Gastrocnemius medialis (tissue), 4 donors: ENCODE measurements at regions of chr7 and their contacts with region 1.

Region 1: DNA sequence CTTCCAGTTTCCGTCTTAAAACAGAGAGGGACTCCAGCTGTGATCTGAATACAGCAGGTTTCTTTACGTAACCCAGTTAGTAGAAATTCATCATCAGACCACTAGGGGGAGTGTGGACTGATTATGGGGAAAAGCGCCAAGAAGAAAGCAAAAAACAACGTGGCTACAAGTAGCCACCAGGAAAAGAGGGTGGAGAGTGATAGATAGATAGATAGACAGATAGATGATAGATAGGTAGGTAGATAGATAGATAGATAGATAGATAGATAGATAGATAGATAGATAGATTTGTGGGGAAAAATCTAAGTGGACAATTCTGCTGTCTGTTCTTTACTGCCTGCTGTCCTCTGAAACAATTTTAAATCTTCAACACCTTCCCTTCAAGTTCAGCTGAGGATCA is 12.7 kb upstream of the AKR1B10 start:
- DNase-seq: no peak
- ATAC-seq: peak; percentile 55 to 70
- H3K4me3 ChIP-seq: no peak overlapping the region
- H3K27ac ChIP-seq: peak overlapping the region in 3 of 4 donors; percentile 78 to 90 (median 86)
- H3K4me1 ChIP-seq: peaks cover 24 to 35% of the 10 kb centered on the region in 2 donors
- H3K27me3 ChIP-seq: no peaks in the 10 kb centered on the region
- CTCF ChIP-seq: peak; percentile 79 to 89 (median 81)
- POLR2A ChIP-seq: no peak

Region 2: DNA sequence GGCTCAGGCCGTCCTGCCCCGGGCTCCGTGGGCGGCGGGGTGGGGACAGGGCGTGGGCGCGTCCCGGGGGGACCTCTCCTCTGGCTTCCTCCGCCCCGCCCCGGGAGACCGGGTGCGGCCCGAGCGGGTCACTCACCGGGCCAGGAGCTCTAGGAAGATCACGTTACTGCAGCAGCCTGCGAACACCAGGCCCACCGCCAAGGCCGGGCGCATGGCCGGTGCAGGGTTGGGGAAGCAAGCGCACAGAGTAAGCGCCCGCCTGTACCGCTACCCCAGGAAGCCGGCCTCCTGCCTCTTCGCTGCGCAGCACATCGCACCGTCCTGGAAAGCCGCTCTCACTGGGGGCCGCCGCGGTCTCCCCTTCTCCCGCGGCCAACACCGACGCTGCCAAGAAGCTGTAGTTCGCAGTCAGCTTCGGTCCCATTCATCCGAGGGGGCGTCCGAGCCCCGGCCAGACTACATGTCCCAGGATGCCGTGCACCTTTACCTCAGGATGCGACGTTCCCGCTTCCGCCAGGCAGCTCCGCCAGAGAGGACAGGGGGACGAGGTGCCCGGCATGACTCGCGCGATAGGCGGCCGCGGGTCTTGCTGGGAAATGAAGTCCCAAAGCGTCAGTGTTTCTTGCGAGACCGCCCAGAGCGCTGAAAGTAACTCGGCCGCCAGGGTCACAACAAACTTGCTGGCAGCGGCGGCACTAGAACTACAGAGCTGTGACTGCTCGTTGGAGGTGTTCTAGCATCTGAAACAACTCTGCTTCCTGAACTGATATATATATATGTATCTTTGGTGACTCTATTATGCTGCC is 197.9 kb before region 1 on chr7 and contains the start of gene SLC35B4:
- in situ Hi-C with region 1: no loop called
- intact Hi-C with region 1: loop called (anchors 2 kb)
- DNase-seq: peak; percentile 97 to 98
- ATAC-seq: peak; percentile 96 to 97
- H3K4me3 ChIP-seq: peak within 1 kb of the TSS; percentile 76 to 99 (median 84)
- H3K27ac ChIP-seq: peak within 1 kb of the TSS; percentile 88 to 97 (median 94)
- H3K4me1 ChIP-seq: peaks cover 0 to 9% of the 10 kb centered on the region in 2 donors
- H3K27me3 ChIP-seq: no peaks in the 10 kb centered on the region
- CTCF ChIP-seq: peak in 4 of 5 experiments; percentile 27 to 46 (median 34)
- POLR2A ChIP-seq: peak; percentile 14 to 15
- total RNA-seq, gene SLC35B4: 1.7 to 5.0 (median 2.3) TPM

Region 3: GRCh38 chr7:134444198-134444871 is 70.3 kb before region 1 on chr7:
- in situ Hi-C with region 1: loop called in 2 of 4 experiments (anchors 10 kb)
- intact Hi-C with region 1: loop called (anchors 2 kb)
- DNase-seq: peak; percentile 52 to 61
- ATAC-seq: peak; percentile 82
- H3K4me3 ChIP-seq: no peak overlapping the region
- H3K27ac ChIP-seq: peak overlapping the region; percentile 59 to 83 (median 68)
- H3K4me1 ChIP-seq: peaks cover 14 to 38% of the 10 kb centered on the region in 2 donors
- H3K27me3 ChIP-seq: no peaks in the 10 kb centered on the region
- CTCF ChIP-seq: peak in 2 of 5 experiments; percentile 39 to 56
- POLR2A ChIP-seq: no peak

Region 4: GRCh38 chr7:134547397-134548054 is 32.9 kb after region 1 on chr7:
- in situ Hi-C with region 1: loop called in 2 of 4 experiments (anchors 5 kb)
- intact Hi-C with region 1: loop called (anchors 1 kb)
- DNase-seq: peak; percentile 77 to 82
- ATAC-seq: peak; percentile 78 to 80
- H3K4me3 ChIP-seq: peak overlapping the region; percentile 34 to 54 (median 43)
- H3K27ac ChIP-seq: peak overlapping the region; percentile 73 to 88 (median 82)
- H3K4me1 ChIP-seq: peaks cover 28 to 36% of the 10 kb centered on the region in 2 donors
- H3K27me3 ChIP-seq: no peaks in the 10 kb centered on the region
- CTCF ChIP-seq: peak; percentile 86 to 92 (median 90)
- POLR2A ChIP-seq: no peak

Region 5: DNA sequence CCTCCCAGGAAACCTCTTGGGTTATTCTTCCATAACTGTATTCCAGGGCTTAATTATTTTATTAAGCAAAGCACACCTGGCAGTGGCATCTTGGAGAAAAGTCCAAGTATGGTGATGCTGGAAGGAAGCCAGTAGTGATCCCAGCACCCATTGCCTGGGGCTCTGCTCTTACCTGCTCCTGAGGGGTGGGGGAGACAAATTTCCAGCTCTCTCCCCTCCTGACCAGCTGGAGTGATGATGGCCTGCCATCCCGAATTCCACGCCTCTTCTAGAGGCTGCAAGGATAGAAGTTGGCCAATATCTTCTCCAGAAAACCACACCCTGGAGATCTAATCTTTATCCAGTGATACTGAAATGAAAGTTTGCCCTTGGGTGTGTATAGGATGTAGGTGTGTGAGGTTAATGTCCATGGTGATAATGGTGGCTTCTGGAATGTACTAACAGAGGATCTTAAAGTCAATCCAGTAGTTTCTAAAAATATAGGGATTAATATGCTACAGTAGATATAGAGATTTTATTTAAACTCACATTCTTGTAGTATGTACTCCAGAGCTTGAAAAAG is 56.4 kb after region 1 on chr7:
- in situ Hi-C with region 1: no loop called
- intact Hi-C with region 1: no loop called
- DNase-seq: no peak
- ATAC-seq: no peak
- H3K4me3 ChIP-seq: no peak overlapping the region
- H3K27ac ChIP-seq: no peak overlapping the region
- H3K4me1 ChIP-seq: peaks cover 0 to 10% of the 10 kb centered on the region in 2 donors
- H3K27me3 ChIP-seq: no peaks in the 10 kb centered on the region
- CTCF ChIP-seq: no peak
- POLR2A ChIP-seq: no peak

Region 6: GRCh38 chr7:134605973-134606923 is 91.6 kb after region 1 on chr7:
- in situ Hi-C with region 1: loop called (anchors 10 to 25 kb)
- intact Hi-C with region 1: loop called (anchors 1 kb)
- DNase-seq: peak; percentile 34 to 38
- ATAC-seq: peak; percentile 89 to 90
- H3K4me3 ChIP-seq: peak overlapping the region in 2 of 4 donors; percentile 12 to 27
- H3K27ac ChIP-seq: no peak overlapping the region
- H3K4me1 ChIP-seq: no peaks in the 10 kb centered on the region
- H3K27me3 ChIP-seq: no peaks in the 10 kb centered on the region
- CTCF ChIP-seq: peak; percentile 81 to 98 (median 89)
- POLR2A ChIP-seq: no peak